ENCODE measurements at regions of chr11 and their contacts with region 1.

Region 1: GRCh38 chr11:73295231-73295995 is 12.7 kb upstream of the ARHGEF17 start:
- DNase-seq: peak; percentile 76 to 88 (median 83)
- H3K4me3 ChIP-seq: no peak overlapping the region
- H3K27ac ChIP-seq: no peak overlapping the region
- H3K4me1 ChIP-seq: peaks cover 0 to 18% (median 4%) of the 10 kb centered on the region in 4 experiments
- H3K27me3 ChIP-seq: no peaks in the 10 kb centered on the region

Region 2: GRCh38 chr11:73072901-73073481 is 222.4 kb before region 1 on chr11:
- CTCF ChIA-PET with region 1: no interaction called
- POLR2A ChIA-PET with region 1: no interaction called
- DNase-seq: peak; percentile 25 to 79 (median 71)
- H3K4me3 ChIP-seq: peak overlapping the region in 6 of 7 experiments; percentile 2 to 68 (median 27)
- H3K27ac ChIP-seq: peak overlapping the region; percentile 17 to 74
- H3K4me1 ChIP-seq: peaks cover 0 to 27% (median 11%) of the 10 kb centered on the region in 4 experiments
- H3K27me3 ChIP-seq: no peaks in the 10 kb centered on the region

Region 3: GRCh38 chr11:73280651-73281071 is 14.8 kb before region 1 on chr11:
- CTCF ChIA-PET with region 1: interaction called, 154 read pairs
- POLR2A ChIA-PET with region 1: no interaction called
- DNase-seq: no peak
- H3K4me3 ChIP-seq: no peak overlapping the region
- H3K27ac ChIP-seq: no peak overlapping the region
- H3K4me1 ChIP-seq: peaks cover 0 to 29% (median 3%) of the 10 kb centered on the region in 4 experiments
- H3K27me3 ChIP-seq: no peaks in the 10 kb centered on the region